Right cardiac atrium (tissue), 5 donors: ENCODE measurements at regions of chr4 and their contacts with region 1.

Region 1: DNA sequence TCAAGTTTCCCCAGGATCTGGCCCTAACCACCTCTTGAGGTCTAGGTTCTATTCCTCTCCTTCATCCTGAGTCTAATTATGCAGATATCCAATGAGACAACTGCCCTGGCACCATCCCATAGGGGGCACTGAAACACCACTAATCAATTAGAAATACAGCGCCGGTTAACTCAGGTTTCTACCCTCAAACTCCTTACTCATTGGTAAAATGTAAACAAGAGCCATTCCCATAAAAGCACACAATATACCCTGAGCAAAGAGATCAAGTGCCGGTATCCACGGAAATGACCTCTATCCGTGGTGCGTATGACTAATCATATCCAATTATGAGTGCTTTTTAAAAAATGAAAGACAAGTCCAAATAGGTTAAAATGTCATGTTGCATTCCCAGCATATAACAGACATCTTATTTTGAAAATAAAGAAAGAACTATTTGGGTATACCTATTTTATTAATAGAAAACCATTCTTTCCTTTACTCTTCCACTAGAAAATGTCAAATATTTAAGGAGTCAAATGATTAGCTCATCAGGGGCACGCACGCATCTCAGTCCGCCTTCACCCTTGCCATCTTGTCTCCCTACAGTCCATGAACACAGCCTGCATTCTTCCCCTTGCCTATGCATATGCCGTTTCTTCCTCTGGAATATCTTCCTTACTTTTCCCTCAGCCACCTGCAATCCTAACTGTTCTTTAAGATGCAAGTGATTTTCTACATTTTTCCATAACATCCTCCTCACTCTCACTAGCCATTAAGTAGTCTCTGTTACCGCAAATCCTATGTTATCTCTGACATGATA is 141.1 kb downstream of the MAML3 start:
- DNase-seq: peak in 2 of 3 donors; percentile 42 to 70
- ATAC-seq: peak; percentile 89 to 91
- H3K4me3 ChIP-seq: no peak overlapping the region
- H3K27ac ChIP-seq: no peak overlapping the region
- H3K4me1 ChIP-seq: no peaks in the 10 kb centered on the region
- H3K27me3 ChIP-seq: no peaks in the 10 kb centered on the region

Region 2: GRCh38 chr4:139099366-139099982 is 913.4 kb before region 1 on chr4:
- intact Hi-C with region 1: no loop called
- DNase-seq: peak in 2 of 3 donors; percentile 62 to 69
- ATAC-seq: peak; percentile 75 to 85
- H3K4me3 ChIP-seq: no peak overlapping the region
- H3K27ac ChIP-seq: no peak overlapping the region
- H3K4me1 ChIP-seq: no peaks in the 10 kb centered on the region
- H3K27me3 ChIP-seq: no peaks in the 10 kb centered on the region

Region 3: GRCh38 chr4:140326395-140326993 is 313.6 kb after region 1 on chr4:
- intact Hi-C with region 1: loop called in 1 of 4 experiments (anchors 10 kb)
- DNase-seq: no peak
- ATAC-seq: peak; percentile 77 to 81
- H3K4me3 ChIP-seq: no peak overlapping the region
- H3K27ac ChIP-seq: no peak overlapping the region
- H3K4me1 ChIP-seq: no peaks in the 10 kb centered on the region
- H3K27me3 ChIP-seq: no peaks in the 10 kb centered on the region

Region 4: DNA sequence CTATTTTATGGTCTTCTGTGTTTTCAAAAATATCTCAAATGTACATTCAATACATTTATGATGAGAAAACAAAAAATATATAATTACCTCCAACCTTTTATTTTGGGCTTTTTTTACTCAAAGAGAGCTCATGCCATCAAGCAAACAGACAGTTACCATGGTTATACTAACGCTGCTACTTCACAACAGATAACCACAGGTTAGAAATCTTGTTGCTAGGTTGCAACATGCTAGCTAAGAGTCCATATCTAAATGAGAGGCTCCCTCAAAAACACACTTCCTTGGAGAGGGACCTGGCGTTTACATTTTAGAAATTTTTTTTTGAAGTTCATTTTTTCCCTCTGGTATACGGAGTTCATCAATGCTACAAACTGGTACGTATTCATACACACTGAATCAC is 699.0 kb after region 1 on chr4:
- intact Hi-C with region 1: no loop called
- DNase-seq: no peak
- ATAC-seq: no peak
- H3K4me3 ChIP-seq: no peak overlapping the region
- H3K27ac ChIP-seq: no peak overlapping the region
- H3K4me1 ChIP-seq: peaks cover 2% of the 10 kb centered on the region
- H3K27me3 ChIP-seq: no peaks in the 10 kb centered on the region